Natural killer cell (primary cell): ENCODE measurements at regions of chr7 and their contacts with region 1.

Region 1: DNA sequence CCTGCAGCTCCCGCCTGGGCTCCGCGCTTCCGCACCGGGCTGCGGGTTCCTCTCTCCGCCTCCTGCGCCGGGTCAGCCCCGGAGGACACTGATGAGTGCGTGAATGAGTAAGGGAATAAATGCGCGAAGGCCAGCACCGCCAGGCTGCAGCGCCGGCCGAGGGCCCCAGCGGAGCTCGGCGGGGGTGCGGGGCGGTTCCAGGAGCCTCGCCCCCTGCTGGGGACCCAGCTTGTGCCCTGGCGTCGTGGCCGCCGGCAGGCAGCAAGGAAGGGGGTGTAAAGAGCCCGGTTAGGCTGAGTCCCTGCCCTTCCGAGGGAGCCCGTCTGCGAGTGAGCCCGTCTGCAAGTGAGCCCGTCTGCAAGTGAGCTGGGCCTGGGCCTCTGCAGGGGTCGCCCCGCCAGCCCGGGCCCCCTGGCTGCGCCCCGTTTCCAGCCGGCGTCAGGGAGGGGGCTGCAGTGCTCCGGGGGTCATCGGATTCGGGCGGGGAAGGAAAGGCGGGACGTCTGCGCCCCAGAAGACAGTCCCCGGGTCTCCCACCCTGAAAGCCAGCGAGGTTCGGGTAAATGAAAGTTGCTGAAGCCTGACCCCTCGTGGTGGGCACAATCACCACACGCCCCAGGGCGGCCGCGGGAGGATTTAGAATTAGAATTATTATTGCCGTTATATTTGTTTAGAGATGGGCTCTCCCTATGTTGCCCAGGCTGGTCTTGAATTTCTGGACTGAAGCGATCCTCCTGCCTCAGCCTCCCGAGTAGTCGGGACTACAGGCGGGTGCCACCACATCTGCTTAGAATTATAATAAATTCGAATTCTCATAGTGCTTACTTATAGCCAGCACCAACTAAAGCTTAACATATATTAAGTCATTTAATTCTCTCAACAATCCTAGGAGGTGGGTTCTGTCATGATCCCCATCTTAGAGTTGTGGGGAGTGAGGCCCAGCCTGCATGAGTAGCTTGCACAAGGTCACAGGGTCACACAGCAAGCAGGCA is 8.6 kb upstream of the CRYGN start:
- DNase-seq: peak; percentile 73 to 88
- ATAC-seq: peak; percentile 88 to 90 (median 89)
- H3K4me3 ChIP-seq: peak overlapping the region; percentile 47
- H3K4me3 Mint-ChIP-seq: peak overlapping the region; percentile 79
- H3K27ac ChIP-seq: peak overlapping the region; percentile 17
- H3K27ac Mint-ChIP-seq: peak overlapping the region in 1 of 2 donors; percentile 71
- H3K4me1 ChIP-seq: peaks cover 5% of the 10 kb centered on the region
- H3K4me1 Mint-ChIP-seq: no peaks in the 10 kb centered on the region
- H3K27me3 ChIP-seq: no peaks in the 10 kb centered on the region
- H3K27me3 Mint-ChIP-seq: peaks cover 12% of the 10 kb centered on the region in 2 donors
- CTCF ChIP-seq: peak; percentile 83

Region 2: DNA sequence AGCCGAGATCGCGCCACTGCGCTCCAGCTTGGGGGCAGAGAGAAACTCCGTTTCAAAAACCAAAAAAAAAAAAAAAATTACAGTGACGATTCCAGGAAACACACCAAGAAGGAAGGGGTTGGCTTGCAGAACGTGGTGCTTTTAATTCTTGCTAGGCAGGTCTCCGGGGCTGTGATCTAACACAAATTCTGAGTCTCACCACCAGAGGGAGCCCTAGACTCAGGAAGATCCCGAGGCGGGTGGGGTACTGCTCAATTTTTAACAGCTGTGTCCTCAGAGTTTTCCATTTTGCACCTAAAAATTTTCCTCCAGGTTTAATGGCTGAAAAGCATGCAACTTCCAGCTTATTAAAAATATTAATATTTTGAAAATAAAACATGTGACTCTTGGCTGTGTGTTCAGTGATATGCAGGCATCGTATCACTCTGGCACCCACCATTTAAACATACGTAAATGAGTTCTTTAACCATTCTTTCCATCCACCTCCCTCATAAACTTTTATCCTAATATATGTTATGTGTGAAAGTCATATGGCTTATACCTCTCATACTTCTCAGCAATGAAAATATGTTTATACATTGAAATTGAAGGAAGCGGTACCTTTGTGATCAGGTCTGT is 133.4 kb before region 1 on chr7:
- intact Hi-C with region 1: loop called (anchors 1 kb)
- DNase-seq: peak; percentile 57 to 92
- ATAC-seq: peak; percentile 86 to 96 (median 95)
- H3K4me3 ChIP-seq: no peak overlapping the region
- H3K4me3 Mint-ChIP-seq: no peak overlapping the region
- H3K27ac ChIP-seq: no peak overlapping the region
- H3K27ac Mint-ChIP-seq: peak overlapping the region in 1 of 2 donors; percentile 58
- H3K4me1 ChIP-seq: peaks cover 4% of the 10 kb centered on the region
- H3K4me1 Mint-ChIP-seq: peaks cover 0 to 5% of the 10 kb centered on the region in 2 donors
- H3K27me3 ChIP-seq: no peaks in the 10 kb centered on the region
- H3K27me3 Mint-ChIP-seq: no peaks in the 10 kb centered on the region
- CTCF ChIP-seq: peak; percentile 89

Region 3: GRCh38 chr7:151400626-151401315 is 47.8 kb before region 1 on chr7:
- intact Hi-C with region 1: no loop called
- DNase-seq: peak in 1 of 2 donors; percentile 41
- ATAC-seq: no peak
- H3K4me3 ChIP-seq: no peak overlapping the region
- H3K4me3 Mint-ChIP-seq: no peak overlapping the region
- H3K27ac ChIP-seq: no peak overlapping the region
- H3K27ac Mint-ChIP-seq: no peak overlapping the region
- H3K4me1 ChIP-seq: peaks cover 10% of the 10 kb centered on the region
- H3K4me1 Mint-ChIP-seq: peaks cover 0 to 4% of the 10 kb centered on the region in 2 donors
- H3K27me3 ChIP-seq: no peaks in the 10 kb centered on the region
- H3K27me3 Mint-ChIP-seq: no peaks in the 10 kb centered on the region
- CTCF ChIP-seq: no peak

Region 4: DNA sequence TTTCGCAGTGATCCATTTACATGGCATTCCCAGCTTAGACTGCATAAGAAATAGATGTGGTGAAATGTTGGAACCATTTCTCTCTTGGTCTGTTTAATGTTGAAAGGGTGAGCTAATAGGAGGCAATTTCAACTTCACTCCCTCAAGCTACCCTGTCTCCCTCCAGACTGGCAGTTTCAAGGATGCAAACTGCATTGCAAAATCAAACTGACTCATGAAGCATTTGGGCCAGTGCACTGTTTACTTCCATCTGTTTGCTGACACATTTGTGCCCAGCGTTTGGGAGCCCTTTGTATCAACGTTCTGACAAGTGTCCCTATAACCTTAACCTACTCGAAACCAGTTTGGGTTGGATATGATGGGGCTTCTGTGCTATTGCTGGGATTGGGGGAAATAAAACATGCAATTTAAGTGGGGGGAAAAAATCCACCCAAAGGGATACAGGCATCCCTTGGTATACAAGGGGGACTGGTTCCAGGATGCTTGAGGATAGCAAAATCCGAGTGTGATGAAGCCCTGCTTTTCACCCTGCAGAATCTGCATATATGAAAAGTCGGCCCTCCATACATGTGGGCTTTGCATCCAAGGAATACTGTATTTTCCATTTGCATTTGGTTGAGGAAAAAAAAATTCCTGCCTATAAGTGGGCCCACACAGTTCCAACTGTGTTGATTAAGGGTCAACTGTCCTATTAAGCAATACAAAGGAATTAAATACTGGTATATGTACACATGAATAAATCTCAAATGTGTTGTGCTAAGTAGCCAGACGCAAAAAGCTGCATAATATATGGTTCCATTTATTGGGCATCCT is 55.6 kb after region 1 on chr7:
- intact Hi-C with region 1: no loop called
- DNase-seq: no peak
- ATAC-seq: no peak
- H3K4me3 ChIP-seq: no peak overlapping the region
- H3K4me3 Mint-ChIP-seq: no peak overlapping the region
- H3K27ac ChIP-seq: no peak overlapping the region
- H3K27ac Mint-ChIP-seq: no peak overlapping the region
- H3K4me1 ChIP-seq: peaks cover 4% of the 10 kb centered on the region
- H3K4me1 Mint-ChIP-seq: peaks cover 64 to 69% of the 10 kb centered on the region in 2 donors
- H3K27me3 ChIP-seq: no peaks in the 10 kb centered on the region
- H3K27me3 Mint-ChIP-seq: no peaks in the 10 kb centered on the region
- CTCF ChIP-seq: no peak